ENCODE measurements at regions of chr20 and their contacts with region 1.

Region 1: DNA sequence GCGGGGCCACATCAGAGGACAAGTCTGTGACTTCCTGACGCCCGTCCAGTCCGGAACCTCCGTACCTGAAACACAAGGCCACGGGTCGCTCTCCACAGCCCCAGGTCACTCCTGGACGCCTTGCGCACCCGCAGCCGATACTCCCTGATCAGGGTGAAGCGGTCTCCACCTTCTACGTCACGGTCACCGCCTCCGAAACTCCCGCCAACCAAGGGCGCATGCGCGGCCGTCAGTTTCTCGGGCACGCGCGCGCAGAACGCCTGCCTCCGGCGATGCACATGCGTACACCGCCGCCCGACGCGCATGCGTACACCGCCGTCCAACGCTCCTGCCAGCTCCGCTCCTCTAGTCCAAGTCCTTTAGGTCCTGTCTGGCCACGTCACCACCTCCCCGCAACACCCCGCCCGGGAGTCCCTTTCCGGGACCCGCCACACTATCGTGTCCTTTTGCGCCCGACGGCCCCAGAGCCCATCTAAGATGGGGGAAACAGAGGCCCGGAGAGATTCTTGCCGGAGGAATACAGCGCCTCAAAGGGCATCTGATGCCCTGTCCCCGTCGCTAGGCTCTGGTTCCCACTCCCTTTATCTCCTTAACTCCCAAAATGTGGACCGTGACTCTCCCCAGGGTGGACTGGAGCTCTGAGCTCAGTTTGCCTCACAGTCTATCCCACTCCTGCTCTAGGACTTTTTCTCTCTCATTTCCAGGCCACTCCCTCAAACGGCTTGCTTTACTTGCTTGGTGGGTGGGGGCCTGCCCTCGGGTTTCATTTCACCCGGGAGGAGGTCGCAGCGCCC is at the start of gene DSN1:
- DNase-seq: peak; percentile 99
- H3K4me3 Mint-ChIP-seq: peak within 1 kb of the TSS; percentile 89
- H3K27ac Mint-ChIP-seq: peak within 1 kb of the TSS; percentile 91
- H3K4me1 Mint-ChIP-seq: peaks cover 26% of the 10 kb centered on the region
- H3K27me3 Mint-ChIP-seq: peaks cover 2% of the 10 kb centered on the region
- total RNA-seq, gene DSN1: 25.9 to 30.1 TPM

Region 2: DNA sequence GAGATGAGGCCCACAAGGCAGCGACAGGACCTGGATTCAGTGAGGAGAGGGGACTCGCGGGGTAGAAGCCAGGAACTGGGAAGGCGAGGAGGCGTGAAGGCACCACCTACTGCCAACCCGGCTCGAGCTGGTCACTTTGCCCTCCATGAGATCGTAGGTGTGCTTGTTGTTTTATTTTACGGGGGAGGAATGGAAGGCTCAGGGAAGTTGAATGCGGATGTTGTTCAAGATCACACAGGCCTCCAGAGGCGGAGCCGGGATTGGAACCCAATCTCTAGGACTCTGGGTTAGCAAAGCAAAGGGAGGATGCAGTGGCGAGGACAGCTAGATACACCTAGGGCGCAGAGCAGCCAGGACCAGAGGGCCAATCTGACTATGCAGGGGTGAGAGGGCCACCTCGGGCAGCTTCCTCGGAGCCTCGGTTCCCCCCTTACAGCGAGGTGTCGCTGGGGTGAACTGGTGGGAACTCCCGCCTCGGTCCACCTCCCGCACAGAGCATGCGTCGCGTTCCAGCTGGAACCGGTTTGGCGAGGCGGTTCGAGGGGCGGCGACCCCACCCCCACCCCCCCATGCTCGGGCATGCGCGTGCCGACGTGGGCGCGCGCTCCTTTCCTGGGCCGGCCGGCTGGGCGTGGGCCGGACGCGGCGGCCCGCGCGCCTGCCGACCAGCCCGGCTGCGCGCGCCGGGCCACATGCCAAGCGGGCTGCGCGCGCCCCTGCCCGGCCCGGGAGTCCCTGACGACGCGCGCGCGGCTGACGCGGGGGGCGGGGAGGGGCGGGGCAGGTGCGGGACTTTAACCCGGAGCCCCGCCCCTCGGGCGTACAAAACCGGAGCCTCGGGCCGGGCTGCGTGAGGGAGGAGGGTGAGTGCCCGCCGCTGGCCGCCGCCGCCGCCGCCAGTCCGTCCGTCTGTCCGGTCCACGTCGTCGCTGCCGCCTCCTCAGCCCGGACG is 312.9 kb before region 1 on chr20:
- CTCF ChIA-PET with region 1: interaction called, 3 read pairs
- POLR2A ChIA-PET with region 1: no interaction called
- intact Hi-C with region 1: loop called (anchors 5 kb)
- DNase-seq: peak; percentile 91
- H3K4me3 Mint-ChIP-seq: peak overlapping the region; percentile 65
- H3K27ac Mint-ChIP-seq: peak overlapping the region; percentile 83
- H3K4me1 Mint-ChIP-seq: peaks cover 46% of the 10 kb centered on the region
- H3K27me3 Mint-ChIP-seq: no peaks in the 10 kb centered on the region

Region 3: DNA sequence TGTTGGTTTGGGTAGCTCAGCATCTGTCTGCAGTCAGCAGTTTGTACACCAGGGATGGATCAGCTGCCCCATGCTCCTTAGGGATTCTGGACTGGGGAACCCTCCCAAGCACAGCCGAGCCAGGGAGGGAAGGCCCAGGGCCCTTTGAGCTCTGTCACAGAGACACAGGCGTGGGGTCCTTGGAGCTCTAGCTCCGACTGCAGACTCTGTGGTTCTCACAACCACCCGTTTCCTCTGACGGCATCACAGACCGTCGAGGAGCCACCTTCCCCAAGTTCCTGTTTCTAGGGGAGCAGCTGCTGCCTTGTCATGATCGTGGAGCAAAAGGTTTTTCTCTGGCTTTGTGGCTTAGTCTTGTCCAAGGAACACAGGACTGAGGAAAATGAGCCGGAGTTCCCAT is 127.8 kb before region 1 on chr20 and contains the start of gene SLA2:
- CTCF ChIA-PET with region 1: interaction called, 9 read pairs
- POLR2A ChIA-PET with region 1: interaction called, 5 read pairs
- intact Hi-C with region 1: loop called (anchors 5 kb)
- DNase-seq: peak; percentile 81
- H3K4me3 Mint-ChIP-seq: peak within 1 kb of the TSS; percentile 97
- H3K27ac Mint-ChIP-seq: peak within 1 kb of the TSS; percentile 100
- H3K4me1 Mint-ChIP-seq: peaks cover 47% of the 10 kb centered on the region
- H3K27me3 Mint-ChIP-seq: no peaks in the 10 kb centered on the region
- total RNA-seq, gene SLA2: 47.1 to 47.7 TPM

Region 4: DNA sequence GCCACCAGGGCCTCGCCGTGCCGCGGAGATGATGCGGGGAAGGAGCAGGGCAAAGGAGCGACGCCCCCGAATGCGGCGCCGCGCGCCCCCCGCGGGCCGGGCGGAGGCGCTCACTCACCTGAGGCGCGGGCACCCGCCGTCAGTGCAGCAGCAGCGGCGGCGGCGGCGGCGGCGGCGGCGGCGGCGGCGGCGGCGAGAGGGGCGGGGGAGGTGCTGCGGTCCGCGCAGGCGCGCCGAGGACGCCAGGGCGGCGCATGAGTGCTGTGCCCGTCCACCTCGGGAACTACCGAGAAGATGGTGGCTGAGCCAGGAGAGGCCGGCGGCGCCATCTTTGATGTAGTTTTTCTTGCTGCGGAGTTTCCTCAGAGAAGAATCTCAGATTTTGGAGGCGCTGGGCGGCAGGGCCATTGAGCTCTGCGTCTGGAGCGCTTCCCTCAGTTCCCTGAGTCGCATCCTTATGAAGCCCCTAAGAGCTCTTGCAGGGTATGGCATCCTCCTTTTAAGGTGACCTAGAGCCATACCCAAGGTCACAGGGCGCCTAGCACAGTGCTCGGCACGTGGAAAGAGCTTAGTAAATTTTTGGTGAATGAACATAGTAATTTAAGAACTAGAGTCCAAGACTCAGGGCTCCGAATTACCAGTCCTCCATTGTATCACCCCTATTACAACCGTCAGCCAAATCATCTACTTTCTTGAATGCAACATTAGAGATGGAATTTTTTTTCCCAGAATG is 27.7 kb before region 1 on chr20 and contains the start of gene NDRG3:
- CTCF ChIA-PET with region 1: interaction called, 5 read pairs
- POLR2A ChIA-PET with region 1: interaction called, 3 read pairs
- intact Hi-C with region 1: loop called (anchors 1 kb)
- DNase-seq: peak; percentile 95
- H3K4me3 Mint-ChIP-seq: peak within 1 kb of the TSS; percentile 88
- H3K27ac Mint-ChIP-seq: peak within 1 kb of the TSS; percentile 84
- H3K4me1 Mint-ChIP-seq: peaks cover 13% of the 10 kb centered on the region
- H3K27me3 Mint-ChIP-seq: no peaks in the 10 kb centered on the region
- total RNA-seq, gene NDRG3: 29.9 to 33.1 TPM

Region 5: GRCh38 chr20:36808317-36809257 is 34.8 kb after region 1 on chr20:
- CTCF ChIA-PET with region 1: interaction called, 11 read pairs
- POLR2A ChIA-PET with region 1: no interaction called
- intact Hi-C with region 1: no loop called
- DNase-seq: peak; percentile 83
- H3K4me3 Mint-ChIP-seq: no peak overlapping the region
- H3K27ac Mint-ChIP-seq: peak overlapping the region; percentile 54
- H3K4me1 Mint-ChIP-seq: peaks cover 3% of the 10 kb centered on the region
- H3K27me3 Mint-ChIP-seq: no peaks in the 10 kb centered on the region

Measured in activated CD4-positive, alpha-beta memory T cell treated with anti-CD3 and anti-CD28 coated beads for 36 hours (primary cell).